A673 (cell line): ENCODE measurements at regions of chr2 and their contacts with region 1.

Region 1: GRCh38 chr2:147937744-147938349 is 82.7 kb downstream of the ORC4 start:
- DNase-seq: peak; percentile 52
- H3K4me3 ChIP-seq: no peak overlapping the region
- H3K27ac ChIP-seq: no peak overlapping the region
- H3K4me1 ChIP-seq: no peaks in the 10 kb centered on the region
- H3K27me3 ChIP-seq: no peaks in the 10 kb centered on the region
- CTCF ChIP-seq: peak; percentile 88

Region 2: DNA sequence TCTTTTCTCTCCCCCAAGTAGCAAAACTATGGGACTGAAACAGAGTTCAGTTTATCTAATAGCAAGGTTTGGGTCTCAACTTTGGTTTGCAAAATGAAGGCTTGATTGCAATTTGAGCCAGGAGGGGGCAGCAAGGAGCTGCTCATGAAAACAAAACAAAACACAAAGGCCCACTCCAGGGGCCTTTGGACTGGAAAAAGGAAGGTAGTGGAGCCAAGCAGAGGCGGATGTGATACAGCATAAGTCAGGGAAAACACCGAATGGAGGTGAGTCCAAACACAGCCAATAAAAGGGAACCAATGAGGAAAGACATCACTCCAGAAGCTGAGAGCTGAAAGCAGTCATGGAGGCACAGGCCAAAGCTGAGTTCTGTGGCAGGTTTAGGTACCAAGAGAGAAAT is 892.7 kb before region 1 on chr2:
- CTCF ChIA-PET with region 1: no interaction called
- POLR2A ChIA-PET with region 1: no interaction called
- intact Hi-C with region 1: no loop called
- DNase-seq: peak; percentile 73
- H3K4me3 ChIP-seq: no peak overlapping the region
- H3K27ac ChIP-seq: no peak overlapping the region
- H3K4me1 ChIP-seq: no peaks in the 10 kb centered on the region
- H3K27me3 ChIP-seq: no peaks in the 10 kb centered on the region
- CTCF ChIP-seq: peak; percentile 78

Region 3: GRCh38 chr2:148201075-148202004 is 263.5 kb after region 1 on chr2:
- CTCF ChIA-PET with region 1: no interaction called
- POLR2A ChIA-PET with region 1: no interaction called
- intact Hi-C with region 1: loop called (anchors 1 kb)
- DNase-seq: peak; percentile 77
- H3K4me3 ChIP-seq: no peak overlapping the region
- H3K27ac ChIP-seq: no peak overlapping the region
- H3K4me1 ChIP-seq: no peaks in the 10 kb centered on the region
- H3K27me3 ChIP-seq: no peaks in the 10 kb centered on the region
- CTCF ChIP-seq: peak; percentile 74